Thyroid gland (tissue), 4 donors: ENCODE measurements at regions of chr1 and their contacts with region 1.

Region 1: DNA sequence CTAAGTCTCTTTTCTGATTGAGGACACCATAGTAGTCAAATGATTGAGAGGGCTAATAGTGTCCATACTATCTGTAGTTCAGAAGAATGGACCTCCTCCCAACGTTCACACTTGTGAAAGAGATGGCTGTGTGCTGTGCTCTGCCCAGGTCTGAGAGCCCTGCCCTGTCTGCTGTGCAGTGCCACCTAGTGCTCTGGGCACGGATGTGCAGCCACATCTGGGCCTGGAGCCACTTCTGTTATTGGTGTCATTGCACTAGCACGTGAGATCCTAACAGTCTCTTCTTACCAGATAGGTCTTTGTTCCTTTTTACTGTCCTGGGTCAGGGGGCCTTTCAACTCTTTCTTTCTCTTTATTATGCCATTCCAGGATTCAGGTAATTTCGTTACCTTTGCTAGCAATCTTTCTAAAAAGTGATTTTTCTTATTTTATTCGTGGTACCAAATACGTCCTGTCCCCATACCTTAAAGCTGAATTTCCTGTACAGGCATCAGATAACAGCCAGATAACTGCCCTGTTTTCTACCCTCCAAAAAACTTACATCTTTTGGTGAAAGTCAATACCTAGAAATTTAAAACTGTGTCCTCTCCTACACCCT is 21.7 kb downstream of the INTS3 start:
- DNase-seq: peak; percentile 83 to 86
- H3K4me3 ChIP-seq: no peak overlapping the region
- H3K27ac ChIP-seq: peak overlapping the region in 2 of 3 donors; percentile 23 to 31
- H3K4me1 ChIP-seq: peaks cover 0 to 21% of the 10 kb centered on the region in 2 donors
- H3K27me3 ChIP-seq: no peaks in the 10 kb centered on the region
- CTCF ChIP-seq: peak; percentile 85 to 96 (median 92)
- POLR2A ChIP-seq: no peak

Region 2: DNA sequence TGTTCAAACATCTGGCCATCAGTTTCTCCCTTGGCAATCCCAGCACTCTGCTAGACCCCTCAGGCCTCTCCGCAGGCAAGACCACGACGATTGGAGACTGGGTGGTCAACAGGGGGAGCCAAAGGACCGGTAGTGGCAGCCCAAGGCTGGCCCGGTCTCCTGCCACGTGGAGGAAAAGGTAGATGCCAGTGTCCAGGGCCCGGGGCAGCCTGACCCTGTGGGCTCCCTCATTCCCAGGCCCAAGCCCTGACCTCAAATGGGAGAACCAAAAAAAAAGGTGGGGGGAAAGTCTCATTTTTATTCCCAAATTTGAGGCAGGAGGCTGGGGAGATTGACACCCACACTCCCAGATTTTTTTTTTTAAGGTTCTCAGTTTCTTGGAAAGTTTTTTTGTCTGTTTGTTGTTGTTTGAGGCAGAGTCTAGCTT is 238.5 kb before region 1 on chr1:
- intact Hi-C with region 1: loop called (anchors 5 kb)
- DNase-seq: peak; percentile 83 to 86
- H3K4me3 ChIP-seq: no peak overlapping the region
- H3K27ac ChIP-seq: no peak overlapping the region
- H3K4me1 ChIP-seq: peaks cover 6 to 24% of the 10 kb centered on the region in 2 donors
- H3K27me3 ChIP-seq: no peaks in the 10 kb centered on the region
- CTCF ChIP-seq: peak; percentile 69 to 95 (median 92)
- POLR2A ChIP-seq: no peak

Region 3: GRCh38 chr1:153677718-153678505 is 71.6 kb before region 1 on chr1:
- intact Hi-C with region 1: loop called (anchors 2 kb)
- DNase-seq: peak; percentile 46
- H3K4me3 ChIP-seq: peak overlapping the region in 2 of 3 donors; percentile 25 to 51
- H3K27ac ChIP-seq: peak overlapping the region in 2 of 3 donors; percentile 47 to 61
- H3K4me1 ChIP-seq: peaks cover 18 to 22% of the 10 kb centered on the region in 2 donors
- H3K27me3 ChIP-seq: no peaks in the 10 kb centered on the region
- CTCF ChIP-seq: peak; percentile 71 to 90 (median 80)
- POLR2A ChIP-seq: no peak